Cardiac septum (tissue), 1 donor: ENCODE measurements at regions of chr3 and their contacts with region 1.

Region 1: DNA sequence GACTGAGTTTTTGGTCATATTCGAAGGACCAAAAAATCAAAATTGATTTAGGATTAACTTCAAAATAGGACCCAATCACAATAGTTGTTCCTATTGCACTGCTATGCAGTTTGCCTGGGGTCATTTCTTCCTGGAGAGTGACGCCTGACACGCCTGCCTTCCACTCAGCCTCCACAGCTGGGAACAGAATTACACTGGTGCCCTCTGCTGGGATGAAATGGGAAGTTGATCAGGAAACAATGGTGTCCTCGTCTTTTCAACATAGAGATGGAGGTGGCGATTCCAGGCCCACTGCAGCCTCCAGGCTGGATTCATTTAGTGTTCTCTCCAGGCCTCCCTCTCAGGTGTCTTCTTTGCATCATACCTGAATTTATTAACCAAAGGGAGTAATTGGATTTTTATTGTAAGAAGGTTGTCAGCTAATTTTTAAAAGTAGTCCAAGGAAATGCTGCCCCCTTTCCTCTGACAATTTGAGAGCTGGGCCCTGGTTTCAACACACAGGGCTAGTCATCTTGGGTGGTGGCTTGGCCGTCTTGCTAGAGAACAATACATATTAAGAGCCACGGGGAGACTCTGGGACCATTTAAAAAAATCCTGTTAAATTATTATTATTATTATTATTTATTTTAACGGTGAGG is 69.7 kb downstream of the GAP43 start:
- DNase-seq: no peak

Region 2: GRCh38 chr3:114827495-114827894 is 865.5 kb before region 1 on chr3:
- intact Hi-C with region 1: loop called (anchors 10 kb)
- DNase-seq: no peak

Region 3: GRCh38 chr3:115217678-115218451 is 475.1 kb before region 1 on chr3:
- intact Hi-C with region 1: loop called (anchors 1 kb)
- DNase-seq: no peak

Region 4: DNA sequence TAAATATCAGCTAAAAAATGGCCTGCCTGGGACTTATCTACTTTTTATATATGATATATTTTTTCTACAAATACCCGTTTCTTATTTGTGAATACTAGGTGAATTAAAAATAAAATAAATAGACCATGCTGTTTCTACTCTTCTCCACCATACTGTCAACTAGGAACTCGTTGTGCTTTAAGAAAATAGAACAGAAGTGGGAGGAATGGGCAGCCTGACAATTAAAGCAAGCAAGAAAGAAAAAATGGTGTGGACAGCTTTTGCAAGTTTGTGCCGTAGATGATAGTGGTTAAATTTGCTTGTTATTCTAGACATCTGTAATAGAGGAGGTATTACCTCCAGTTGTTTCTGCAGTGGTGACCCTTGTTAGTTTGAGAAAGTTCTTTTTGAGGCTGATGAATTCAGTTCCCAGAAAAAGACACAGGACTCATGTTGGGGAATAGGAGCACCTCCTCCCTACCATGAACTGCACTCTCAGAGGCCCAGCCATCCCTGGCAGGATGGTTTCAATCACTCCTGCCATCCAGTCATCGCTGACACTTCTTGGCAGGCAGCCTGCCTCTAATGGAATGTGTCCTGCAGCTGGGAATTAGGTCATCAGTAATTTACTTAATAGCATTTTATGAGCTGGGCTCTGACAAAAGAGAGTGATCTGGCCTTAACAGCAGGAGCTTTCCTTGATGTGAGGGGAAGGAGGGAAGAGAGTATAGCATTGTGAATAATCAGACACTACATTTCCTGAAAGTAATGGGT is 174.7 kb before region 1 on chr3:
- intact Hi-C with region 1: loop called (anchors 5 kb)
- DNase-seq: peak; percentile 84

Region 5: GRCh38 chr3:115571413-115571812 is 121.6 kb before region 1 on chr3:
- intact Hi-C with region 1: loop called (anchors 5 kb)
- DNase-seq: no peak

Region 6: GRCh38 chr3:115783938-115784738 is 91.1 kb after region 1 on chr3:
- intact Hi-C with region 1: loop called (anchors 1 kb)
- DNase-seq: peak; percentile 95